ENCODE measurements at regions of chr18 and their contacts with region 1.

Region 1: DNA sequence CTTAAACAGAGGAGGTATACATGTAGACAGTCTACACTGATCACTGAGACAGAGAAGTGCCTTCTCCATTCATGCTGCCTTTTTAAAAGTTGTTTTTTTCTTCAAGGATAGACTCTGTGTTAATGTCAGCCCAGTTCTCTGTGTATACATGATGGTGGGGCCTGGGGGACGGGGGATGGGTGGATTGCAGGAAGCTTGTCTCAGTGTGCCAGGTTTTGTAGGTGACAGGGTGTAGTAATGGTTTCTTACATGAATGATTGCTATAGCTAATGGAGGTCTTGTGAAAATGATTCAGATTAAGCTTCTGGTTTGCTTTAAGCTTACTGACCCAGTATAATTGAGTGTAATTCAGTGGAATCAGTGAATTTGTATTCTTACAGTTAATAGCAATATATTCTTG is 423.6 kb downstream of the PTPRM start:
- DNase-seq: no peak
- H3K4me3 ChIP-seq: no peak overlapping the region
- H3K27ac ChIP-seq: no peak overlapping the region
- H3K4me1 ChIP-seq: no peaks in the 10 kb centered on the region
- H3K27me3 ChIP-seq: no peaks in the 10 kb centered on the region
- CTCF ChIP-seq: no peak
- POLR2A ChIP-seq: no peak

Region 2: DNA sequence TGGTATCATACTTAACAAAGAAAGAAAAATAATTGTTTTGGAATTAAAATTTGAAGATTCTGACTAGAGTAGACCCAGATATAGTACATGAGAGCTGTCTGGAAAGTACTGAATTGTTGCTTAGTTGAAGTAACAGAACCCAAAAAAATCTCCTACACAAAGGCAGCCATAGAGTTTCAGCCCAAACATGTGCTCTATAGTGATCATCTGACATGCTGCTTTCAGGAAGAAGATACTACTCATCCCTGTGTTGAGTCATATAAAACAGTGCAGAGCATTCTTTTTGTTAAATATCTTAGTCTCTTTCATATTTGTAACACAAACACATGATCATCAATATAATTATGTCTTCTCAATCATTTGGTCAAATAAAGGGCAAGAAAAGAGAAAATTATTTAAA is 508.3 kb before region 1 on chr18:
- intact Hi-C with region 1: no loop called
- DNase-seq: no peak
- H3K4me3 ChIP-seq: no peak overlapping the region
- H3K27ac ChIP-seq: no peak overlapping the region
- H3K4me1 ChIP-seq: no peaks in the 10 kb centered on the region
- H3K27me3 ChIP-seq: no peaks in the 10 kb centered on the region
- CTCF ChIP-seq: no peak
- POLR2A ChIP-seq: no peak

Region 3: GRCh38 chr18:7872569-7872968 is 118.1 kb before region 1 on chr18:
- intact Hi-C with region 1: loop called in 1 of 2 experiments (anchors 10 kb)
- DNase-seq: peak; percentile 46 to 78 (median 73)
- H3K4me3 ChIP-seq: no peak overlapping the region
- H3K27ac ChIP-seq: no peak overlapping the region
- H3K4me1 ChIP-seq: peaks cover 0 to 14% of the 10 kb centered on the region in 2 donors
- H3K27me3 ChIP-seq: no peaks in the 10 kb centered on the region
- CTCF ChIP-seq: peak in 5 of 6 experiments; percentile 12 to 45 (median 36)
- POLR2A ChIP-seq: no peak

Measured in adrenal gland (tissue), 19 donors.